Panc1 (cell line): ENCODE measurements at regions of chr1 and their contacts with region 1.

Region 1: GRCh38 chr1:209875515-209875914 is 47.7 kb downstream of the UTP25 start:
- DNase-seq: no peak
- ATAC-seq: peak; percentile 91
- H3K4me3 ChIP-seq: no peak overlapping the region
- H3K27ac ChIP-seq: no peak overlapping the region
- H3K4me1 ChIP-seq: no peaks in the 10 kb centered on the region; the same call in 1 of the 2 replicates
- H3K27me3 ChIP-seq: peaks cover 2% of the 10 kb centered on the region; the same call in 1 of the 2 replicates
- CTCF ChIP-seq: peak; percentile 63

Region 2: GRCh38 chr1:209989525-209989924 is 114.0 kb after region 1 on chr1:
- CTCF ChIA-PET with region 1: no interaction called
- POLR2A ChIA-PET with region 1: no interaction called
- in situ Hi-C with region 1: no loop called
- intact Hi-C with region 1: loop called (anchors 5 kb)
- DNase-seq: no peak
- ATAC-seq: 0 out of 2 replicates have a peak, but pooled peaks have one; percentile 71
- H3K4me3 ChIP-seq: no peak overlapping the region
- H3K27ac ChIP-seq: no peak overlapping the region
- H3K4me1 ChIP-seq: no peaks in the 10 kb centered on the region
- H3K27me3 ChIP-seq: peaks cover 2% of the 10 kb centered on the region; the same call in 1 of the 2 replicates
- CTCF ChIP-seq: no peak